CD4-positive, alpha-beta T cell (primary cell): ENCODE measurements at regions of chr18 and their contacts with region 1.

Region 1: GRCh38 chr18:42114310-42114943 is 159.4 kb downstream of the PIK3C3 start:
- DNase-seq: peak; percentile 5 to 71 (median 28)
- ATAC-seq: peak; percentile 57
- H3K4me3 ChIP-seq: no peak overlapping the region
- H3K4me3 Mint-ChIP-seq: no peak overlapping the region
- H3K27ac ChIP-seq: no peak overlapping the region
- H3K27ac Mint-ChIP-seq: no peak overlapping the region
- H3K4me1 ChIP-seq: peaks cover 3% of the 10 kb centered on the region
- H3K4me1 Mint-ChIP-seq: peaks cover 14% of the 10 kb centered on the region
- H3K27me3 ChIP-seq: no peaks in the 10 kb centered on the region
- H3K27me3 Mint-ChIP-seq: no peaks in the 10 kb centered on the region
- CTCF ChIP-seq: peak; percentile 82

Region 2: DNA sequence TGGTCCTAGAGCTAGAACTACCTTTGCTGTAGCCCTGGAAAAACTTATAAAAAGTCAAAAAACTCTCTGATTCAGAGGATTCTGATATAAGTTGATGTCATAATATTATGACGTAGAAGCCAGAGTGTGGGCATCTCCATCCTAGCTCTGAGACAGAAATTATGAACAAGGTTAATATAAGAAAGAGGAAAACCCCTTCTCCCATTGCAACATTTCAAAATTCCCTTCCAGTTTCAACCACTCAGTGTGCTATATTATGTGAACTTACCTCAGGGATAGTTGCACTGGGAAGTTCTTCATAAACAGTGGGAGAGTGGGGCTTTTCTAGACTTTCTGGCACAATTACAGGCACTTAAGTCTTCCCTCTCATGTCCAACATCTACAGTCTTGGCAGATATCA is 12.2 kb after region 1 on chr18:
- CTCF ChIA-PET with region 1: interaction called, 11 read pairs
- POLR2A ChIA-PET with region 1: no interaction called
- intact Hi-C with region 1: no loop called
- DNase-seq: no peak
- ATAC-seq: no peak
- H3K4me3 ChIP-seq: no peak overlapping the region
- H3K4me3 Mint-ChIP-seq: no peak overlapping the region
- H3K27ac ChIP-seq: no peak overlapping the region
- H3K27ac Mint-ChIP-seq: no peak overlapping the region
- H3K4me1 ChIP-seq: no peaks in the 10 kb centered on the region
- H3K4me1 Mint-ChIP-seq: no peaks in the 10 kb centered on the region
- H3K27me3 ChIP-seq: no peaks in the 10 kb centered on the region
- H3K27me3 Mint-ChIP-seq: peaks cover under 1% of the 10 kb centered on the region
- CTCF ChIP-seq: no peak

Region 3: GRCh38 chr18:42183746-42184145 is 69.3 kb after region 1 on chr18:
- CTCF ChIA-PET with region 1: no interaction called
- POLR2A ChIA-PET with region 1: no interaction called
- intact Hi-C with region 1: no loop called
- DNase-seq: no peak
- ATAC-seq: no peak
- H3K4me3 ChIP-seq: no peak overlapping the region
- H3K4me3 Mint-ChIP-seq: no peak overlapping the region
- H3K27ac ChIP-seq: no peak overlapping the region
- H3K27ac Mint-ChIP-seq: no peak overlapping the region
- H3K4me1 ChIP-seq: no peaks in the 10 kb centered on the region
- H3K4me1 Mint-ChIP-seq: no peaks in the 10 kb centered on the region
- H3K27me3 ChIP-seq: no peaks in the 10 kb centered on the region
- H3K27me3 Mint-ChIP-seq: no peaks in the 10 kb centered on the region
- CTCF ChIP-seq: no peak

Region 4: DNA sequence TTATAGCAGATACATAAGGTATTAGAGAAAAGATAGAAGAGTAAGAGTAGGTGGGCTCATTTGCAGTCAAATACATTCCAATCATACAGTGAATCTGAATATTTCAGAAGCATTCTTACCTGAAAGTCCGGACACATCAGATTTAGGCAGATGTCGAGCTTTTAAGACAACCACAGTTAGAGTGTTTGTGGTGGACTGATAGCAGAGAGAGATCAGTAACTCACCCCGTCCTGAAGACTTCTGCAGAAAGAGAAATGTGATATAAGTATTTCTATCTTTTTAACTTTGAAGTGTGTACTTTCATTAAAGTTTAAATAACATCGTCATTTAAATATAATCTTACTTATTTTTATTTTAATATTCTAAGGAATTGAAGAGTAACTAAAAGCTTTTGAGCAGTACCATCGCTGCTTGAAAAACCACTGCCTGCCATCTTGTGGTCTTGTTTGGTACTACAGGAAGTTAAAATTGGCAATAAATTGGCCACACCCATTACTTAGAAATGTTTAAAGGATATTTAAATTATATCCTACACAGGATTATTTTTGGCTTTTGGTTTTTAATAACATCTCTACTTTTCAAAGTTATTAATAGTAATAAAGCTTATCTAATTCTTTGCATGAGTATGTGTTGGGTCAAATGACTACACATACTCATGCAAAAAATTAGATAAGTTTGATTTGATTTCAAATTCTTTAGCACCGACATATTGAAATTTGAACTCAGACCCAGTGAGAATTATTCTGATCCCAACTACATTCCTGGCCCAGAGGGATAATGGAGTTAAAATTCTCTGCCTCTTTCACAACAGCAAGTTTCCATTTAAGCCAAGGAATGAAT is 1157.4 kb after region 1 on chr18:
- CTCF ChIA-PET with region 1: interaction called, 13 read pairs
- POLR2A ChIA-PET with region 1: no interaction called
- intact Hi-C with region 1: loop called in 1 of 2 experiments (anchors 5 kb)
- DNase-seq: peak in 4 of 14 experiments; percentile 3 to 36 (median 32)
- ATAC-seq: no peak
- H3K4me3 ChIP-seq: no peak overlapping the region
- H3K4me3 Mint-ChIP-seq: no peak overlapping the region
- H3K27ac ChIP-seq: no peak overlapping the region
- H3K27ac Mint-ChIP-seq: no peak overlapping the region
- H3K4me1 ChIP-seq: no peaks in the 10 kb centered on the region
- H3K4me1 Mint-ChIP-seq: no peaks in the 10 kb centered on the region
- H3K27me3 ChIP-seq: no peaks in the 10 kb centered on the region
- H3K27me3 Mint-ChIP-seq: no peaks in the 10 kb centered on the region
- CTCF ChIP-seq: peak; percentile 72

Region 5: DNA sequence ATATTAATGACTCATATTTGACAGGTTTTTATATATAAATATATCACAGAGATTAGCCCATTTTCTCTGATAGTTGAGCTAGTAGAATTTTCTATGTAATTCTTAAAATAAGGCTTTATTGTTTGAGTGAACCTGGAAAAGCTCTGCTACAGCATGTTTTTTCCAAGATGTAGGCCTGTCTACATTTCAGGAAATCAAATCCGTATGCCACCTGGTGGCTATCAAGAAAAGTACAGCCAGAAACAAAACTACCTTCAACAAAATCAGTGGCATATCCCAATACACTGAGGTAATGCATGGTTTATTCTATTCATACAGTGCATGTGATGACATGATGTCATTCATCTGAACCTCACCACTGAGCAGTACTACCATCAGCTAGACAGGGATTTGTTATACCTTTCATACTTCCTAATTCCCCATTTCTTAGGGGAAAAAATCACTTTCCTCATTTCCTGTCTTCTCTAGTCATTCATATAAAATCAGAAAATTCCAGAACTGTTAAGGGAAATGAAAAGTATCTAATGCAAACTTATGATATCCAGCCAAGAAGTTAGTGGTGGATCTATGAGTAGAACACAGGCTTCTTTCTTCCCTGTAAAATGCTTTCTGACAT is 1473.2 kb after region 1 on chr18:
- CTCF ChIA-PET with region 1: interaction called, 3 read pairs
- POLR2A ChIA-PET with region 1: no interaction called
- intact Hi-C with region 1: loop called in 1 of 2 experiments (anchors 2 kb)
- DNase-seq: peak in 3 of 14 experiments; percentile 14 to 17 (median 14)
- ATAC-seq: no peak
- H3K4me3 ChIP-seq: no peak overlapping the region
- H3K4me3 Mint-ChIP-seq: no peak overlapping the region
- H3K27ac ChIP-seq: no peak overlapping the region
- H3K27ac Mint-ChIP-seq: no peak overlapping the region
- H3K4me1 ChIP-seq: no peaks in the 10 kb centered on the region
- H3K4me1 Mint-ChIP-seq: no peaks in the 10 kb centered on the region
- H3K27me3 ChIP-seq: no peaks in the 10 kb centered on the region
- H3K27me3 Mint-ChIP-seq: no peaks in the 10 kb centered on the region
- CTCF ChIP-seq: peak; percentile 55